Left colon (tissue), 2 donors: ENCODE measurements at regions of chr3 and their contacts with region 1.

Region 1: DNA sequence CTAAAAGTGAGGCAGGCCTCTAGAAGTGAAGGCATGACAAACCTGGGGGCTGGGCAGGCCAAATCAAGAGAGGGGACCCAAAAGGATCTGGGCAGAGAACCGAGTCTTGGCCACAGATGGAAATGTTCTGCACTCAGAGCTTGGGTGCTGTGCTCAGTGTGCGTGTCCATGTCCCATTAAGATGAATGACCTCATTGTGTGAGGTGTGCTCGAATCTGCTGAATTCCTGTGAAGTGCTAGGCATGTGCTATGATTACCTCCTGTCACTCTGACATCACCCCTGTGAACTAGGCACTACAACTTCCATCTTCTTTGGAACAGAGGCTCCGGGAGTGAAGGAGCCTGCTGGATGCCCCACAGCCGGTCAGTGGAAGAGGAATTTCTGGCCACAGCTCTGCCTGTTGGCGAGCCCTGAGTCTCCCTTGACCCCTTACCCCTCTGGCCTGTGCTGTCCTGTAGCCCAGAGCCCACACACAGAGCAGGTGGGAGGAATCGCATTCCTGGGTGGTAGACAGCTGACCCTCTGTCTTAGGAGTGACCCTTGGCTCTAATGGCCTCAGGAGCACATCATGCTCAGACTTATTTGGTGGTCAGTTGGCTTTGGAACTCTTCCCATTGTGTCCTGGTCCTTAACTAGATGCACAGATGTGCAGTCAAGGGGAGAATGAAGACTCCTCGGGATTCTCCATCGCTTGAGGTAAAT is 67.6 kb upstream of the CTDSPL start:
- DNase-seq: no peak
- ATAC-seq: no peak

Region 2: DNA sequence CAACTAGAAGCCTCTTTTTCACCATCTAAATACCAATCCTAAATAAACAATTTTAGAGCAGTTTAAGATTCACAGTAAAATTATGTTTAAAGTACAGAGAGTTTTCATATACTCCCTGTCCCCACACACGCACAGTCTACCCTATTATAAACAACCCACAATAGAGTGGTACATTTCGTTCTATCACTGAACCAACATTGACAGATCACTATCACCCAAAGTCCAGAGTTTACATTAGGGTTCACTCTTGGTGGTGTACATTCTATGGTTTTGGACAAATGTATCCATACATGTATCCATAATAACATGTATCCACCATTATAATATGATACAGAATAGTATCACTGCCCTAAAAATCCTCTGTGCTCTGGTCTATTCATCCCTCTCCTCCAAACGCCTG is 711.7 kb before region 1 on chr3:
- intact Hi-C with region 1: loop called in 1 of 2 experiments (anchors 5 kb)
- DNase-seq: no peak
- ATAC-seq: no peak